Activated T-helper 1 cell treated with anti-CD3 and anti-CD28 coated beads, Interleukin-12 subunit alpha, Interleukin-12 subunit beta, Interleukin-2, Interleukin-4 antibody, amounts not matched to agents 30 ng/mL and 10 ng/mL and 1 ng/mL, durations not matched to agents 14 hours and 24 hours and 36 hours (primary cell): ENCODE measurements at regions of chr7 and their contacts with region 1.

Region 1: DNA sequence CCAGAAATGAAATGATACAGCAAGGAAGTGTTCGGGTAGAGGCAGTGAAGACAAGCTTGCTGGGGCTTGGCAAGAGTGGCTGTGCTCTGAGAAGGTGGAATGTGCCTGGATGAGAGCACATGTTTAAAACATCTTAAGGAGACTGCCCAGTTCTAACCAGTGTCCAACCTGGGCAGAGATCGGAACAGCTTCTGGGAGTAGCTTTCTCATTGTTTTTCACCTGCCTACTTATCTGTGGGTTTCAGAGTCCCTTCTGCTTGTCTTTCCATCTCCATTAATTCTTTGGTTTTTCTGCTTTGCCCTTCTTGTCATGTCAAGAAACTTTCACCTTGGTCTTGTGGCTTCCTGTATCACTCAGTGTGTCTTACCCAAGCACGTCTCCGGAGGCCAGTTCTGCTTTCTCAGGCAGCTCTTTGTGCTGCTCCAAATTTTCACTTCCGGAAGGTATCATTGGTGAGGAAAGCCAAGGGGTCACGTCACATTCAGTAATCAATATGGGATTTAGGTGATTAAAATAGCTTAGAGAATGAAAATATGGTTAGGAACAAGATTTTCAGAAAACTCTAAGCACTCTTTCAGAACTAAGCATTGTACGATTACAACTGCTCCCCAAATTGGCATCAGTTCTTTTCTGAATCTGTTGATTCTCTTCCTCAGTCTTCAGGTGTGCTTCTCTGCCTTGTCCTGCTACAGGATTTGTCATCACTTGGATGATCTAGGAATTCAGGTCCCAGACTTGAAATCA is 5.5 kb upstream of the LAMB4 start:
- DNase-seq: peak; percentile 19
- H3K4me3 Mint-ChIP-seq: no peak overlapping the region
- H3K27ac Mint-ChIP-seq: peak overlapping the region; percentile 84
- H3K4me1 Mint-ChIP-seq: peaks cover 27% of the 10 kb centered on the region
- H3K27me3 Mint-ChIP-seq: peaks cover 39% of the 10 kb centered on the region

Region 2: DNA sequence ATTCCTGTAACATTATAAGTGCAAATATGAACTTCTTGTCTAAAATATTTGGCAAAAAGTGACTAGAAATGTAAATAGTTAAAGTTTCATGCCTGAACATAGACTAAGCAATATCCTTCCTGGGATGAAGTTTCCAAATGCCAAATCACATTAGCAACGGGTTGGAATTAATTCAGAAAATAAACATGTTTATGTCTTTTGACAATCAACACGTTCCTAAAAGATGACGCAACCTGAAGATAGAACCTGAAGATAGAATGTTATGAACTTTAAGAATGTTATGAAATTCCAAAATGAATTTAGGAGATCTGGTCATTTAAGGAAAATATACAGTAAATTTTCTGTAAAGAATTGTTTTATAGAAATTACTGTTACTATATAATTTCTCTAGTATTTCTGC is 14.7 kb before region 1 on chr7:
- intact Hi-C with region 1: loop called (anchors 2 kb)
- DNase-seq: no peak
- H3K4me3 Mint-ChIP-seq: no peak overlapping the region
- H3K27ac Mint-ChIP-seq: no peak overlapping the region
- H3K4me1 Mint-ChIP-seq: no peaks in the 10 kb centered on the region
- H3K27me3 Mint-ChIP-seq: peaks cover 10% of the 10 kb centered on the region